Activated T-helper 2 cell treated with anti-CD3 and anti-CD28 coated beads, Interferon-gamma antibody, Interleukin-2, Interleukin-4, amounts not matched to agents 10 μg/mL and 5 μg/mL and 100 μg/mL, durations not matched to agents 14 hours and 24 hours and 36 hours (primary cell): ENCODE measurements at regions of chr10 and their contacts with region 1.

Region 1: DNA sequence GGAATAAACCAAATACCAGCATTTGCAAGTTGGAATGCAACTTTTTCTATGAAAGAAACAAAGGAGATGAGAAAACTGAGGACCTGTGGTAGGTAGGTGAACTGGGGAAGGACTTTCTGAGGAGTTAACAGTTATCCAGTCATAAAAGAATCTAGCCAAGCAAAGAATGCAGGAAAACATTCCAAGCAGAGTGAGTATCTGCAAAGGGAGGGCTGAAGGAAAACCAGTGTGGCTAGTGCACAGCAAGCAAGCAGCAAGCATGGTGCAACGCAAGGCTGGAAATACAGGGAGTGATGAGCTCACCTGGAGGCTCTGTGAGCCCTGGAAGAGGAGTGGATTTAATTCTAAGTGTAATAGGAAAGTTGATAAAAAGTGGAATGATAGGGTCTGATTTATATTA is 44.0 kb downstream of the RTKN2 start:
- DNase-seq: no peak
- H3K4me3 Mint-ChIP-seq: no peak overlapping the region
- H3K27ac Mint-ChIP-seq: no peak overlapping the region
- H3K4me1 Mint-ChIP-seq: peaks cover 9% of the 10 kb centered on the region
- H3K27me3 Mint-ChIP-seq: no peaks in the 10 kb centered on the region

Region 2: DNA sequence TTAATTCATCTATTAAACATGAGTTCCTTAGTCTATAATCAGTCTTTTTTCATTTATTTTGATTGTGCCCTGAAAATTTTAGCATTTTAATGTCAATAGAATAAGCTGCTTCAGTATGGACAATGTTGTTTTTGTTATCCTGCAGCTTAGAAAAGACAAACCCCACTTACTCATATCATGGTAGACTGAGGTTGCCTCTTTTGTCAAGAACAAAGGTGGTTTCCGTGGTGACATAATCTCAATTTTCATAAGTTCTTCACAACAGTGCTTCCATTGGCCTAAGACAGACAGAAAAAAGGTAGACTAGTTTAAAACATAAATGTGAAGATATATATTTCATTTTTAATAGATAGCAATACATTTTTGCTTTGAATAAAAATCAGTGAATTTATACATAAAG is 25.0 kb before region 1 on chr10:
- intact Hi-C with region 1: loop called (anchors 2 kb)
- DNase-seq: no peak
- H3K4me3 Mint-ChIP-seq: no peak overlapping the region
- H3K27ac Mint-ChIP-seq: peak overlapping the region; percentile 14
- H3K4me1 Mint-ChIP-seq: peaks cover 26% of the 10 kb centered on the region
- H3K27me3 Mint-ChIP-seq: no peaks in the 10 kb centered on the region